ENCODE measurements at regions of chr20 and their contacts with region 1.

Region 1: GRCh38 chr20:19940988-19941460 is 76.1 kb upstream of the NAA20 start:
- DNase-seq: no peak
- ATAC-seq: no peak
- H3K4me3 ChIP-seq: no peak overlapping the region
- H3K4me3 Mint-ChIP-seq: no peak overlapping the region
- H3K27ac ChIP-seq: no peak overlapping the region
- H3K27ac Mint-ChIP-seq: no peak overlapping the region
- H3K4me1 ChIP-seq: peaks cover 5% of the 10 kb centered on the region
- H3K4me1 Mint-ChIP-seq: peaks cover 24% of the 10 kb centered on the region
- H3K27me3 ChIP-seq: no peaks in the 10 kb centered on the region
- H3K27me3 Mint-ChIP-seq: peaks cover 32% of the 10 kb centered on the region
- CTCF ChIP-seq: no peak

Region 2: DNA sequence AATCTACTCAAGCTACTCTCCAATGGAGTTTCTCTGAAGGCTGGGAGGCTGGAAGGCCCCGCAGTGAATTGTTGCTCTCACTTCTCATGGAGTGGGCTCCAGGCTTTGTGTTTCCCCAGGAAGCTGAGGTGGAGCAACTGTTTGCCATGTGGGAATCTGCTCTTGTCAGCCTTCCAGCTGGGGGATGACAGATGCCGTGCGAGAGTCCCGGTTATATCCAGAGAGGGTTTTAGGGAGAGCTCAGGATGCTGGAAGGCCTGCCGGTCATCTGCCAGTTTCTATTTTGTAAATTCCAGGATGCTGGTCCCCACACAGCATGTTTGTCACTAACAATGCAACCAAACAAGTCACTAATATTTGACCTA is 22.1 kb before region 1 on chr20:
- CTCF ChIA-PET with region 1: no interaction called
- POLR2A ChIA-PET with region 1: no interaction called
- intact Hi-C with region 1: loop called in 1 of 2 experiments (anchors 1 kb)
- DNase-seq: no peak
- ATAC-seq: no peak
- H3K4me3 ChIP-seq: no peak overlapping the region
- H3K4me3 Mint-ChIP-seq: no peak overlapping the region
- H3K27ac ChIP-seq: no peak overlapping the region
- H3K27ac Mint-ChIP-seq: no peak overlapping the region
- H3K4me1 ChIP-seq: no peaks in the 10 kb centered on the region
- H3K4me1 Mint-ChIP-seq: peaks cover 2% of the 10 kb centered on the region
- H3K27me3 ChIP-seq: no peaks in the 10 kb centered on the region
- H3K27me3 Mint-ChIP-seq: peaks cover 5% of the 10 kb centered on the region
- CTCF ChIP-seq: no peak

Region 3: GRCh38 chr20:19929481-19930145 is 11.4 kb before region 1 on chr20:
- CTCF ChIA-PET with region 1: no interaction called
- POLR2A ChIA-PET with region 1: no interaction called
- intact Hi-C with region 1: no loop called
- DNase-seq: no peak
- ATAC-seq: no peak
- H3K4me3 ChIP-seq: no peak overlapping the region
- H3K4me3 Mint-ChIP-seq: no peak overlapping the region
- H3K27ac ChIP-seq: no peak overlapping the region
- H3K27ac Mint-ChIP-seq: no peak overlapping the region
- H3K4me1 ChIP-seq: no peaks in the 10 kb centered on the region
- H3K4me1 Mint-ChIP-seq: no peaks in the 10 kb centered on the region
- H3K27me3 ChIP-seq: no peaks in the 10 kb centered on the region
- H3K27me3 Mint-ChIP-seq: peaks cover 6% of the 10 kb centered on the region
- CTCF ChIP-seq: no peak

Measured in CD8-positive, alpha-beta T cell (primary cell).